Left ventricle myocardium inferior (tissue), 1 donor: ENCODE measurements at regions of chr6 and their contacts with region 1.

Region 1: GRCh38 chr6:97497713-97498331 is 214.8 kb upstream of the MMS22L start:
- DNase-seq: peak; percentile 53
- H3K4me3 ChIP-seq: no peak overlapping the region
- H3K27ac ChIP-seq: no peak overlapping the region
- H3K4me1 ChIP-seq: no peaks in the 10 kb centered on the region
- H3K27me3 ChIP-seq: peaks cover 20% of the 10 kb centered on the region
- CTCF ChIP-seq: peak; percentile 86

Region 2: DNA sequence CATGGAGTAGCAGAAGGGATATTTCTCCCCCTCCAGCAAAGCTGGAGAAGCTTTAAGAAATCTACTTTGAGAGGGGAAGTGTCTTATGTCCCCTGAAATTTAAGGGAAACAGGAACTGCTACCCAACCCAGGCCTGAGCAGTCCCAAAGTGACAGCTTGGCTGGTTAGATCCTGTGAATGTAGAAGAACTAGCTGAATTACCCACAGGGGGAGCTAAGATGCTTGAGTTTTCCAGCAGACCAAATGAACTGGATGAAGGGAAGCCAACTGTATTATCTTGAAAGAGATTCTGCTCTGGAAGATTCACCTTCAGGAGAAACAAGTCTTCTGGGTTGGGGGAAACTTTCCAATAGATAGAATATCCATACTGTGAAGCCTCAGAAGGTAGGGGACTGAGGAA is 88.5 kb after region 1 on chr6:
- intact Hi-C with region 1: no loop called
- DNase-seq: no peak
- H3K4me3 ChIP-seq: no peak overlapping the region
- H3K27ac ChIP-seq: no peak overlapping the region
- H3K4me1 ChIP-seq: no peaks in the 10 kb centered on the region
- H3K27me3 ChIP-seq: no peaks in the 10 kb centered on the region
- CTCF ChIP-seq: peak; percentile 43

Region 3: GRCh38 chr6:99119109-99120031 is 1621.5 kb after region 1 on chr6:
- intact Hi-C with region 1: loop called (anchors 10 kb)
- DNase-seq: no peak
- H3K4me3 ChIP-seq: no peak overlapping the region
- H3K27ac ChIP-seq: no peak overlapping the region
- H3K4me1 ChIP-seq: no peaks in the 10 kb centered on the region
- H3K27me3 ChIP-seq: peaks cover 48% of the 10 kb centered on the region
- CTCF ChIP-seq: peak; percentile 71